Caco-2 (cell line): ENCODE measurements at regions of chr9 and their contacts with region 1.

Region 1: GRCh38 chr9:20356403-20357035 is 265.8 kb downstream of the MLLT3 start:
- DNase-seq: peak; percentile 65 to 71
- H3K4me3 ChIP-seq: no peak overlapping the region; the same call in 1 of the 2 replicates
- H3K4me3 Mint-ChIP-seq: peak overlapping the region; percentile 51
- H3K27ac Mint-ChIP-seq: peak overlapping the region; percentile 78
- H3K4me1 ChIP-seq: peaks cover 20% of the 10 kb centered on the region
- H3K4me1 Mint-ChIP-seq: peaks cover 11% of the 10 kb centered on the region
- H3K27me3 ChIP-seq: no peaks in the 10 kb centered on the region
- H3K27me3 Mint-ChIP-seq: no peaks in the 10 kb centered on the region
- CTCF ChIP-seq: peak; percentile 53 to 71

Region 2: DNA sequence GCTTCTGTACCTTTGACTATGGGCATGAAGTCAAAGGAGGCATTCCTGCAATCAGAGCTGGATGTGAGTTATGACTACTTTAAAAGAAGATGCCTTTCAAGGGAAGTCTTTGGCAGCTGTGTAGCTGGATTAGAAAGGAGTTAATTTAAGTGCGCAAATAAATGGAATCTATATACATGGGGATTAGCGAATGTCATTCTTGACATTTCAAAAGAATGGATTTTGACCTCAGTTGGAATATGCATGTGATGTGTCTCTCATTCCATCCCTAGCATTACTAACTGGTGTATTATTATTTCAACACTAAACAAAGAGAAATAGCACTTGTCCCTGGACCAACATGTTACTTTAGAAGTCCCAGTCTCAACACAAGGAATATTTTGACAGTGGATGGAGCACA is 208.1 kb before region 1 on chr9:
- CTCF ChIA-PET with region 1: no interaction called
- POLR2A ChIA-PET with region 1: no interaction called
- intact Hi-C with region 1: loop called (anchors 5 kb)
- DNase-seq: peak; percentile 34 to 56
- H3K4me3 ChIP-seq: no peak overlapping the region
- H3K4me3 Mint-ChIP-seq: peak overlapping the region; percentile 38
- H3K27ac Mint-ChIP-seq: no peak overlapping the region
- H3K4me1 ChIP-seq: peaks cover 22% of the 10 kb centered on the region
- H3K4me1 Mint-ChIP-seq: peaks cover 11% of the 10 kb centered on the region
- H3K27me3 ChIP-seq: no peaks in the 10 kb centered on the region
- H3K27me3 Mint-ChIP-seq: no peaks in the 10 kb centered on the region
- CTCF ChIP-seq: no peak

Region 3: DNA sequence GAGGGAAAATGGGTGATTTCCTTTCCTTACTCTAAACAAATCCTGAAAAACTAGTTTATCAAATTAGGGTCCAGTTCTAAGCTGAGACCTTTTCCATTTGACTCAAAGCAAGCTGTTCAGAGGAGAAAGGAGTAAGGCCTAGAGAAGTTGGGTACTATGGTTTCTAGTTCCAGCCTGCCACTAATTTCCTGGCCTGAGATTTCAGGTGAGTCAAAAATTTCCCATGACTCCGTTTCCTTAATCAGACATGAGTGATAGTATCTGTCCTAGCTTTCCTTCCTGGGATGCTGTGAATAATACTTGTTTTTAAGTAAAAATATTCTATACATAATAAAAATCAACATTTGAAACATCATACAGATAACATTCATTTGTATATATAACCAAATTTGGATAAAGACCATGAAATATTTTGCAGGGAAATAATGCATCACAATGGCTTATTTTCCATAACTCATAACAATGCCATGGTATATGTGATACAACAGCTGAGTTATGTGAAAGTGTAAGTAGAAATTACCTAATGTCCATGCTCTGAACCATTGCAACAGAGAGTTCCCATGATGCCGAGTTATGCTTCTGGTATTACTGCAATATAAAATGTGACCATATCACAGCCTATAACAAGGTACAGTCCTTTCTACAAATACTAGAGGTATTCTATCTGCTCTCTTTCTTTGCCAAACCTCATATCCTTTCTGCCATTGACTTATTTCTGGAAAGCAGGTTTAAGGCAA is 123.1 kb after region 1 on chr9:
- CTCF ChIA-PET with region 1: interaction called, 3 read pairs
- POLR2A ChIA-PET with region 1: no interaction called
- intact Hi-C with region 1: loop called (anchors 2 kb)
- DNase-seq: no peak
- H3K4me3 ChIP-seq: no peak overlapping the region
- H3K4me3 Mint-ChIP-seq: no peak overlapping the region
- H3K27ac Mint-ChIP-seq: no peak overlapping the region
- H3K4me1 ChIP-seq: peaks cover 36% of the 10 kb centered on the region
- H3K4me1 Mint-ChIP-seq: no peaks in the 10 kb centered on the region
- H3K27me3 ChIP-seq: no peaks in the 10 kb centered on the region
- H3K27me3 Mint-ChIP-seq: no peaks in the 10 kb centered on the region
- CTCF ChIP-seq: no peak

Region 4: GRCh38 chr9:20788526-20789451 is 432.3 kb after region 1 on chr9:
- CTCF ChIA-PET with region 1: no interaction called
- POLR2A ChIA-PET with region 1: no interaction called
- intact Hi-C with region 1: loop called (anchors 10 kb)
- DNase-seq: no peak
- H3K4me3 ChIP-seq: no peak overlapping the region
- H3K4me3 Mint-ChIP-seq: no peak overlapping the region
- H3K27ac Mint-ChIP-seq: no peak overlapping the region
- H3K4me1 ChIP-seq: peaks cover 14% of the 10 kb centered on the region
- H3K4me1 Mint-ChIP-seq: peaks cover 12% of the 10 kb centered on the region
- H3K27me3 ChIP-seq: no peaks in the 10 kb centered on the region
- H3K27me3 Mint-ChIP-seq: no peaks in the 10 kb centered on the region
- CTCF ChIP-seq: no peak

Region 5: DNA sequence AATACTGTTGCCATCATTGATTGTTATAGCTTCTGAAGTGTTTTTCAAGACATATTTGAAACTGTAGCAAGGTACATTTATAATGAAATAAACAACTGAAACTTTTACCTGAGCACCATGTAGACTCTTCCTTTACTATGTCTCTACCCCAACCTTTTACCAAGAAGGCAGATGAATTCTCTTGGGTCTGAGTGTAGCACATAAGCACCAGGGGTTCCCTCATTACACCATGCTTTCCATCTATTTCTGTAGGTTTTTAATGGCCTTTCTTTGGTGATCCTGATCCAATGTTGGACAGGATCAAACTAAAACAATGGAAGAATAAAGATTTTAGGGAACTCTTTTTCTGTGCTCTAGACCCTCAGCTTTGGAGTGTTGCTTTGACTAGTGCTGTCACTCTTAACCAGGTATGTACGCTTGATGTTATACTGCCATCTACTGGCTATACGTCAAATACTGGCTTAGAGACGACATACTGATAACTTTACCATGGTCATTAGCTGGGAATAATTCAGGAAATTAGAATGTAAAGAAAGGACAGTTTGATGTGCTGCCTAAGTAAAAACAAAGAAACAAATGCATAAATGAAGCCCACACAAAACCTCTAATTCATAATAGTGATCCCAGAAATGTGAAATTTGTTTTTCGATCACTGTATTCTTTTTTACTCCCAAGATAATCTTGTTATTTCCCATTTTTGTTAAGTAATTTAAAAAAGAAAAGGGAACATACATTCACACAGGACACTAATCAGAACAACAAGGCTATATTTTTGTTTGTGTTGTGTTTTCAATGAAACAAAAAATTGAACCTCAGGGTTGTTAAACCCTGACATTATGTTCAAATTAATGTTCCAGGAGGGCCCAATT is 754.4 kb after region 1 on chr9:
- CTCF ChIA-PET with region 1: no interaction called
- POLR2A ChIA-PET with region 1: no interaction called
- intact Hi-C with region 1: loop called (anchors 1 kb)
- DNase-seq: peak; percentile 35 to 56
- H3K4me3 ChIP-seq: no peak overlapping the region
- H3K4me3 Mint-ChIP-seq: no peak overlapping the region
- H3K27ac Mint-ChIP-seq: no peak overlapping the region
- H3K4me1 ChIP-seq: peaks cover 13% of the 10 kb centered on the region; the same call in 1 of the 2 replicates
- H3K4me1 Mint-ChIP-seq: peaks cover 7% of the 10 kb centered on the region
- H3K27me3 ChIP-seq: no peaks in the 10 kb centered on the region
- H3K27me3 Mint-ChIP-seq: no peaks in the 10 kb centered on the region
- CTCF ChIP-seq: peak; percentile 49 to 65